Upper lobe of right lung (tissue), 1 donor: ENCODE measurements at regions of chr6 and their contacts with region 1.

Region 1: GRCh38 chr6:36094753-36095496 is 35.4 kb upstream of the MAPK13 start:
- DNase-seq: peak; percentile 87
- ATAC-seq: peak; percentile 99
- H3K4me3 ChIP-seq: no peak overlapping the region
- H3K27ac ChIP-seq: no peak overlapping the region
- H3K4me1 ChIP-seq: peaks cover 4% of the 10 kb centered on the region
- H3K27me3 ChIP-seq: no peaks in the 10 kb centered on the region
- CTCF ChIP-seq: peak; percentile 98

Region 2: GRCh38 chr6:36027501-36028087 is 67.3 kb before region 1 on chr6 and contains the start of gene MAPK14:
- intact Hi-C with region 1: loop called (anchors 5 kb)
- DNase-seq: peak; percentile 99
- ATAC-seq: peak; percentile 96
- H3K4me3 ChIP-seq: peak within 1 kb of the TSS; percentile 98
- H3K27ac ChIP-seq: peak within 1 kb of the TSS; percentile 95
- H3K4me1 ChIP-seq: peaks cover 31% of the 10 kb centered on the region
- H3K27me3 ChIP-seq: no peaks in the 10 kb centered on the region
- CTCF ChIP-seq: peak; percentile 88
- total RNA-seq, gene MAPK14: 60.6 TPM